ENCODE measurements at regions of chr21 and their contacts with region 1.

Region 1: GRCh38 chr21:32257962-32258785 is 20.7 kb downstream of the MIS18A start:
- DNase-seq: peak; percentile 26 to 89 (median 72)

Region 2: DNA sequence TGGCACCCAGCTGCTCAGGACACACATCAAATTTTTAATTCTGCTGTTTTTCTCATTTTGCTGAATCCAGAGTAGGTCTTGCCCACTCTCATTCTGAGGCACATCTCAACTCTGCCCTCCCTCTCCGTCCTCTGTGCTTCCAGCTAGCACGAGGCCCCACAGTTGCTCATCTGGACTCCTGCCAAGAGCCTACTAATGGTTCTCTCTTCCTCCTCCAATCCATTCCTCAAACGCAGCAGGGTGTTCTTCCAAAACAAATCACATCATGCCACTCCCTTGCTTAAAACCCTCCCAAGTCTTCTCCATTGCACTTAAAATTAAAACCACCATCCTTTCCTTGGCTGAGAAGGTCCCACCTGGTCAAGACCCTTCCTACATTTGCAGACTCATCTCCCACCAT is 476.4 kb before region 1 on chr21:
- intact Hi-C with region 1: loop called (anchors 5 kb)
- DNase-seq: peak in 14 of 42 donors; percentile 11 to 59 (median 28)

Region 3: GRCh38 chr21:31866077-31866511 is 392.1 kb before region 1 on chr21:
- intact Hi-C with region 1: loop called (anchors 2 kb)
- DNase-seq: peak; percentile 82 to 96 (median 89)

Region 4: GRCh38 chr21:32135401-32136363 is 122.5 kb before region 1 on chr21:
- intact Hi-C with region 1: no loop called
- DNase-seq: peak in 5 of 42 donors; percentile 3 to 46 (median 12)

Region 5: GRCh38 chr21:32329331-32329730 is 71.2 kb after region 1 on chr21:
- intact Hi-C with region 1: no loop called
- DNase-seq: peak in 7 of 42 donors; percentile 10 to 52 (median 21)